Pancreas (tissue), 10 donors: ENCODE measurements at regions of chr19 and their contacts with region 1.

Region 1: DNA sequence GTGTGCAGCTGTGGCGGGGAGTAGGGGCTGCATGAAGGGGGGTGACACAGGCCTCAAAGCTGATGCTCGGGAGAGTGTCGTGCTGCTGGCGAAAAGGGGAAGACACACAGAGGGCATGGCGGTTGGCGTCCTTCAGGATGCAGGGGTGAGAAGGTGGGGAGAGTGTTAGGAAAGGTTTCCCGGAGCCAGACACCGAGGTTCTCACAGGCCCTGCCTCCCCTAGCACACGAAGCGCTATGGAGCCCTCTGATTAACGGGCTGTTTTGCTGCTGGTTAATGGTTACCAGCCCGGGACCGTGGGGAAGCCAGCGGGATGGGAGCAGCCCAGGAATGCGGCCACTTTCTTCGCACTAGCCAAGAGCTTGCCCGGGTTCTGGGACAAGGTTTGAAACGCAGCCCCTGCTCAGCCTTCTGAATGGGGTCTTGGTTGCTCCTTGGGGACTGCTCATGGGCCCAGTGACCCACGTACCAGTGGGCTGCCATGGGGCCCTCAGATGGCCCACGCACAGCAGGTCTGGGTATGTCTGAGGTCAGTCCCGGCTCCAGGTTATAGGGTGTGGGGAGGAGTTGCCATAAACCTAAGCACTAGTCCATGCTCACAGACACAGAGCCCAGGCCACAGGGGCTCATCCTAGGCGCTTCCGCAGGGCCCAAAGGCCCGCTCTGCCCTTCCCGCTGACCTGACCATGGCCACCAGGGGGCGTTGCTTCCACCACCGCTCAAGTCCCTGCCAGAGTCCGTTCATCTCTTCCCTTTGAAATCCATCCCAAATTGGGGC is 31.3 kb upstream of the ISYNA1 start:
- DNase-seq: peak in 5 of 6 donors; percentile 52 to 87 (median 70)
- ATAC-seq: peak; percentile 50 to 61 (median 60)
- H3K4me3 ChIP-seq: no peak overlapping the region
- H3K27ac ChIP-seq: peak overlapping the region; percentile 54 to 75 (median 68)
- H3K4me1 ChIP-seq: peaks cover 14 to 19% (median 17%) of the 10 kb centered on the region in 3 donors
- H3K27me3 ChIP-seq: no peaks in the 10 kb centered on the region
- CTCF ChIP-seq: peak; percentile 67 to 76 (median 72)

Region 2: DNA sequence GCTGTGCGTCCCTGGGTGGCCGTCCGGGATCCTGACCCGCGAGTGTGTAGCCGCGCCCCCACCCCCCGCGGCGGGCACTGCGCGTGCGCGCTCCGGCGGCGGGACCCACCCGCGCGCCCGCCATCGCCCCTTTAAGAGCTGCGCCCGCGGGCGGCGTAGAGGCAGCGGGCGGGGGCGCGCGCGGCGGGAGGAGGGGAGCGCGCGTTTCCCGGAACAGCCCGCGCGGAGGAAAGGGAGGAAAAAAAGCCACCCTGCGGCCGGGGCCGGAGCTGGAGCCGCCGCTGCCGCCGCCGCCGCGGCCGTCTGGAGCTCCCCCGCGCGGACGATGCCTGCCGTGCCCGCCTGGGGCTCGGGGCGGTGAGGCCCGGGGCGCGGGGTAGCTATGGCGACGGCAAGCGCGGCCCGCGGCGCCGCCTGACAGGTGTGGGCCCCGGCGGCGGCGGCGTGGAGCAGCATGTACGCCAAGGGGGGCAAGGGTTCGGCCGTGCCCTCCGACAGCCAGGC is 50.0 kb before region 1 on chr19 and contains the start of gene SSBP4:
- intact Hi-C with region 1: no loop called
- DNase-seq: peak; percentile 66 to 89 (median 84)
- ATAC-seq: peak; percentile 43 to 72 (median 57)
- H3K4me3 ChIP-seq: peak within 1 kb of the TSS; percentile 51 to 68 (median 64)
- H3K27ac ChIP-seq: peak within 1 kb of the TSS; percentile 42 to 83 (median 70)
- H3K4me1 ChIP-seq: peaks cover 9 to 33% (median 12%) of the 10 kb centered on the region in 3 donors
- H3K27me3 ChIP-seq: no peaks in the 10 kb centered on the region
- CTCF ChIP-seq: peak in 3 of 4 donors; percentile 13 to 24 (median 16)
- total RNA-seq, gene SSBP4: 20.5 to 33.8 (median 23.7) TPM

Region 3: DNA sequence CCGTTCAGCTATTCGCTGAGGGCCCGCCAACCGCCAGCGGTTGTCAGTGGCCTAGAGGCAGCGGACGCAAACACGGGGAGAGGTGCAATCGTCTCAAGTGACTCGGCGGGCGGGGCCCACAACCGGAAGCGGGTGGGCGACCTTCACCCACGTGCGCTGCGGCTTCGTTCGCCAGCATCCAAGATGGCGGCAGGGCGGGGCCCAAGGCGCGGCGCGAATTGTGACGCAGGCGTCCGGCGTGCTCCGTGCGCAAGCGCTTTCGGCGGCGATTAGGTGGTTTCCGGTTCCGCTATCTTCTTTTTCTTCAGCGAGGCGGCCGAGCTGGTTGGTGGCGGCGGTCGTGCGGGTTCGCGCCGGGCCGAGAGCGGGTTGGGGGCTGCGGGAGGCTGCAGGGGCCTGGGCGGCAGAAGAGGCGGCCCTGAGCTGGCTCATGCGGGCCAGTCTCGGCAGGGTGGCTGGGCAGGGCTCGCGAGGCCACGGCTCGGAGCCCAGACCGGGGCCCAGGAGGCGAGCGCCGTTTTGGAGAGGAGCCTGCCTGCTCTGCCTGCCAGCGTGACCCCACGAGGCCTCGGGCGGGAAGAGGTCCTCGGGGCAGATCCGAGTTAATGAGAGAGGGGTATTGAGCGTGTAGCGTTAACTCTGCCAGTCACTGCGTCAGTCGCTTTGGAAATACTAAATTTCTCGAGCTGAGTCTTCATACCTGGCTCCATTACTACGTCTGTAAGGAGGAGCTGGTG is 102.5 kb after region 1 on chr19 and contains the start of gene UBA52:
- intact Hi-C with region 1: loop called in 2 of 3 experiments (anchors 10 kb)
- DNase-seq: peak; percentile 97 to 99 (median 98)
- ATAC-seq: peak; percentile 96 to 99 (median 98)
- H3K4me3 ChIP-seq: peak within 1 kb of the TSS; percentile 62 to 98 (median 84)
- H3K27ac ChIP-seq: peak within 1 kb of the TSS; percentile 69 to 86 (median 84)
- H3K4me1 ChIP-seq: peaks cover 9 to 13% (median 9%) of the 10 kb centered on the region in 3 donors
- H3K27me3 ChIP-seq: no peaks in the 10 kb centered on the region
- CTCF ChIP-seq: no peak
- total RNA-seq, gene UBA52: 522 to 838 (median 679) TPM